Activated CD4-positive, alpha-beta T cell treated with anti-CD3 and anti-CD28 coated beads for 36 hours (primary cell): ENCODE measurements at regions of chr1 and their contacts with region 1.

Region 1: DNA sequence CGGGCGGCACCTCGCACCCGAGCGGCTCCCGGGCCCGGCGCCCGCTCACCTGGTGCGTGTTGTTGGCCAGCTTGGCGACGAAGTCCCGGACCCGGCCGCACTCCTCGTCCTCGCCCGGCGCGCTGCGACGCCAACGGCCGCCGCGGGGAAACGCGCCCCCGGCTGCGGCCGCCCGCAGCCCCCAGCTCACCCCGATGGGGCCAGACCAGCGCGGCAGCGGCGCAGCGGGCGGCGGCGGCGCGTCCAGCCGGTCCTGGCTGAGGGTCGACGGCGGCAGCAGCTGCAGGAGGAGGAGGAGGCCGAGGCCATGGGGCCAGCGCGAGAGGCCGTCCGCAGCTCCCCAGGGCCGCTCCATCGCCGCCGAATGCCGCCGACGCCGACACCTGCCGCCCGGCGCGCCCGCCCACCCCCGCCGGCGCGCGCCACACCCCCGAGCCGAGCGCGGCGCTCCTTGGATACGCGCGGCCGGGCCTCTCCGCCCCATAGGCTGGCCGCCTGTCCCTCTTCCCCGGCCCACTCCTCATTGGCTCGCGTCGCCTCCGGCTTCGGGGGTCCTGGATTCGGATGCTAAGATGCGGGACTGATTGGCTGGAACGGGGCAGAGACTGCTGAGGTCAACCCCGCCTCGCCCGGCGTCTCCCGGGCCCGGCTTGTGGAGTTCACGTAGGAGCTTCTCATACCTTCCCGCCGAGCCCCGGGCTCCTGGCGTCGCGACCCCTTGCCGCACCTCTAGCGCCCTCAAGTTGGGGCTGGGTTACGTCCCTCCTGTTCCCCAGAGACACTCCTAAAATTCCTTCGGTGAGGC is at the start of gene SORT1:
- DNase-seq: peak; percentile 75
- ATAC-seq: peak; percentile 97
- H3K4me3 Mint-ChIP-seq: peak within 1 kb of the TSS; percentile 71
- H3K27ac Mint-ChIP-seq: no peak within 1 kb of the TSS
- H3K4me1 Mint-ChIP-seq: peaks cover 13% of the 10 kb centered on the region
- H3K27me3 Mint-ChIP-seq: peaks cover 36% of the 10 kb centered on the region
- total RNA-seq, gene SORT1: 0.39 to 0.55 TPM

Region 2: GRCh38 chr1:109201123-109201703 is 196.5 kb before region 1 on chr1:
- CTCF ChIA-PET with region 1: interaction called, 37 read pairs
- POLR2A ChIA-PET with region 1: no interaction called
- intact Hi-C with region 1: loop called (anchors 1 kb)
- DNase-seq: peak; percentile 91
- ATAC-seq: peak; percentile 92
- H3K4me3 Mint-ChIP-seq: no peak overlapping the region
- H3K27ac Mint-ChIP-seq: no peak overlapping the region
- H3K4me1 Mint-ChIP-seq: peaks cover 26% of the 10 kb centered on the region
- H3K27me3 Mint-ChIP-seq: no peaks in the 10 kb centered on the region

Region 3: DNA sequence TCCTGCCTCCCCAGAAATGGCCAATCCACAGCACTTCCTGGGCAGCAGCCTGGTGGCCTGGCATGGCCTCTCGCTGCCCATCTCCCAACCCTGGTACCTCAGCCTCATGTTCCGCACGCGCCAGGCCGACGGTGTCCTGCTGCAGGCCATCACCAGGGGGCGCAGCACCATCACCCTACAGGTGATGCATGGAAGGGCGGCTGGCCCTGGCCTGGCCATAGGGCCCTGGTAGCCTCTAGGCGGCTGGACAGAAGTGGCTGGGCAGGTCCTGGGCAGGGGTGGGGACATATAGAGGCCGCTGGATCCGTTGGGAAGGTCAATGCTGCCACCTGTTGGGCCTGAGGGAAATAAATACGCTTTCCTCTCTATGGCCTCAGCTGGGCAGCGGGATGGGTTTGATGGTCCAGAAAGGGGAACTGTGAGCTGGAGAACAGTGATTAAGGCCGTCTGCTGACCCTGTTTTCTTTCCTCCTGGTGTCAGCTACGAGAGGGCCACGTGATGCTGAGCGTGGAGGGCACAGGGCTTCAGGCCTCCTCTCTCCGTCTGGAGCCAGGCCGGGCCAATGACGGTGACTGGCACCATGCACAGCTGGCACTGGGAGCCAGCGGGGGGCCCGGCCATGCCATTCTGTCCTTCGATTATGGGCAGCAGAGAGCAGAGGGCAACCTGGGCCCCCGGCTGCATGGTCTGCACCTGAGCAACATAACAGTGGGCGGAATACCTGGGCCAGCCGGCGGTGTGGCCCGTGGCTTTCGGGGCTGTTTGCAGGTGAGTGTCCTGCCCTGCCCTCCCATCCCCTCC is 133.9 kb before region 1 on chr1:
- CTCF ChIA-PET with region 1: interaction called, 76 read pairs
- POLR2A ChIA-PET with region 1: no interaction called
- intact Hi-C with region 1: loop called (anchors 1 kb)
- DNase-seq: peak; percentile 92
- ATAC-seq: peak; percentile 98
- H3K4me3 Mint-ChIP-seq: no peak overlapping the region
- H3K27ac Mint-ChIP-seq: peak overlapping the region; percentile 89
- H3K4me1 Mint-ChIP-seq: no peaks in the 10 kb centered on the region
- H3K27me3 Mint-ChIP-seq: no peaks in the 10 kb centered on the region

Region 4: GRCh38 chr1:109277434-109278204 is 120.1 kb before region 1 on chr1:
- CTCF ChIA-PET with region 1: interaction called, 122 read pairs
- POLR2A ChIA-PET with region 1: interaction called, 4 read pairs
- intact Hi-C with region 1: loop called (anchors 1 kb)
- DNase-seq: peak; percentile 82
- ATAC-seq: peak; percentile 91
- H3K4me3 Mint-ChIP-seq: no peak overlapping the region
- H3K27ac Mint-ChIP-seq: no peak overlapping the region
- H3K4me1 Mint-ChIP-seq: peaks cover 12% of the 10 kb centered on the region
- H3K27me3 Mint-ChIP-seq: no peaks in the 10 kb centered on the region

Region 5: GRCh38 chr1:109282952-109283747 is 114.6 kb before region 1 on chr1 and contains the start of gene PSRC1:
- CTCF ChIA-PET with region 1: interaction called, 122 read pairs
- POLR2A ChIA-PET with region 1: no interaction called
- intact Hi-C with region 1: loop called in 1 of 2 experiments (anchors 1 kb)
- DNase-seq: peak; percentile 95
- ATAC-seq: peak; percentile 98
- H3K4me3 Mint-ChIP-seq: peak within 1 kb of the TSS; percentile 86
- H3K27ac Mint-ChIP-seq: peak within 1 kb of the TSS; percentile 90
- H3K4me1 Mint-ChIP-seq: peaks cover 11% of the 10 kb centered on the region
- H3K27me3 Mint-ChIP-seq: no peaks in the 10 kb centered on the region
- total RNA-seq, gene PSRC1: 17.6 to 18.4 TPM

Region 6: GRCh38 chr1:109385417-109385816 is 12.3 kb before region 1 on chr1:
- CTCF ChIA-PET with region 1: interaction called, 20 read pairs
- POLR2A ChIA-PET with region 1: no interaction called
- intact Hi-C with region 1: no loop called
- DNase-seq: no peak
- ATAC-seq: no peak
- H3K4me3 Mint-ChIP-seq: no peak overlapping the region
- H3K27ac Mint-ChIP-seq: no peak overlapping the region
- H3K4me1 Mint-ChIP-seq: peaks cover 3% of the 10 kb centered on the region
- H3K27me3 Mint-ChIP-seq: peaks cover 8% of the 10 kb centered on the region

Region 7: DNA sequence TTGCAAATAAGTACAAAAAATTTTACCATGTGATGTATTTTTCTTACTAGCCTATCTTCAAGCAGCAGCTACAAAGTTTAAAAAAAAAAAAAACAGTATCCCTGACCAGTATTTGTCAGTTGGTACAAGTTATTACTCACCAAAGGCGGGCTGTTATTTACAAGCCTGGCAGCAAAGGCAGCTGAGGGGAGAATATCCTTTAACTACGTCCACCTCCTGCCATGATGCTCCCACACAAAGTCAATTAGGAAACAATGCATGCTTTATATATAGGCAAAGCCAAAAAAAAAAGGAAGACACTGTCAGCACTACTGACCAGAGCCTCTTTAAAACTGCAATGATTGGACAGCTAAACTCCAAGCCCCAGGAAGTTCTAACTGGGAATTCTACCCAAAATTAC is 14.8 kb after region 1 on chr1:
- CTCF ChIA-PET with region 1: interaction called, 31 read pairs
- POLR2A ChIA-PET with region 1: interaction called, 4 read pairs
- intact Hi-C with region 1: no loop called
- DNase-seq: no peak
- ATAC-seq: no peak
- H3K4me3 Mint-ChIP-seq: no peak overlapping the region
- H3K27ac Mint-ChIP-seq: no peak overlapping the region
- H3K4me1 Mint-ChIP-seq: peaks cover 28% of the 10 kb centered on the region
- H3K27me3 Mint-ChIP-seq: no peaks in the 10 kb centered on the region